ENCODE measurements at regions of chr2 and their contacts with region 1.

Region 1: GRCh38 chr2:126971481-126972278 is 73.0 kb downstream of the TEX51 start:
- DNase-seq: peak in 1 of 2 experiments; percentile 66
- H3K4me3 ChIP-seq: peak overlapping the region; percentile 43; the same call in 1 of the 2 replicates
- H3K27ac ChIP-seq: no peak overlapping the region
- H3K4me1 ChIP-seq: no peaks in the 10 kb centered on the region
- H3K27me3 ChIP-seq: peaks cover 92% of the 10 kb centered on the region
- CTCF ChIP-seq: peak; percentile 99

Region 2: DNA sequence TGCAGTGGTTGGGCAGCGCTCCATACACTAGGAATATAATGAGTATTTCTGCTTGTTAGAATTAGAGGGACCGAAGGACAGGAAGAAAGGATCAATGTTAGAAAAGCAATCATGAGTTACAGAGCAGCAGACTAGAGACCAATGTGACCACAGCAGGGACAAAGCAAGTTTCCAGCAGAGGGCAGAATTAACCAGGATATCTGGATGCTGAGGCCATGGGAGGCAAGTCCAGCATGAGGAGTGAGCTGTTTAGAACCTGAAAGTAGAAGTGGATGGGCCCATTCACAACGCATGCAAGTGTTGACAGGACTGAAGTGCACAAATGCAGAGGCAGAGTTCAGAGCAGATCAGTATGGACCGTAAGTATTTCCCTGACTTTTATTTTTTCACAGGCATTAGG is 1226.2 kb before region 1 on chr2:
- CTCF ChIA-PET with region 1: no interaction called
- POLR2A ChIA-PET with region 1: no interaction called
- intact Hi-C with region 1: loop called (anchors 5 kb)
- DNase-seq: peak; percentile 15 to 47
- H3K4me3 ChIP-seq: no peak overlapping the region
- H3K27ac ChIP-seq: no peak overlapping the region
- H3K4me1 ChIP-seq: no peaks in the 10 kb centered on the region
- H3K27me3 ChIP-seq: no peaks in the 10 kb centered on the region
- CTCF ChIP-seq: peak; percentile 57

Region 3: GRCh38 chr2:126986631-126987187 is 15.0 kb after region 1 on chr2:
- CTCF ChIA-PET with region 1: no interaction called
- POLR2A ChIA-PET with region 1: no interaction called
- intact Hi-C with region 1: no loop called
- DNase-seq: no peak
- H3K4me3 ChIP-seq: no peak overlapping the region
- H3K27ac ChIP-seq: no peak overlapping the region
- H3K4me1 ChIP-seq: no peaks in the 10 kb centered on the region
- H3K27me3 ChIP-seq: peaks cover 86% of the 10 kb centered on the region
- CTCF ChIP-seq: no peak

Region 4: DNA sequence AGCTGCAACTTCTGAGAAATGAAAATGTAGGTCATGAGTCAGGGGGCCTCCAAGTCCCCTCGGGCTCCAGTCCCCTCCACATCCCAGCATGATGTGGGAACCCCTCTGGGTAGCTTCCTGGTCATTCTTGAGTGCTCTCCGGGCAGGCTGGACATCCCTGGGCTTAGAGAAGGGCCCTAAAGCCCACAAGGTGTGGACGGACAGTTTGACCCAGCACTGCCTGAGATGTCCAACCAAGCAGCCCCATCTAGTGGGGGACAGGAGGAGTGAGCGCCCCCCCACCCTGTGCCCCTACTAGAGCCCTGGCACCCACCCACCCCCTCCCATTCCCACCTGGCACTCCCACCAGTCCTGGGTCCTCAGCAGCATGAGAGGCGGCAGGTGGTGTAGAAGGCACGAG is 202.5 kb after region 1 on chr2:
- CTCF ChIA-PET with region 1: no interaction called
- POLR2A ChIA-PET with region 1: no interaction called
- intact Hi-C with region 1: loop called (anchors 5 kb)
- DNase-seq: peak; percentile 47 to 48
- H3K4me3 ChIP-seq: no peak overlapping the region
- H3K27ac ChIP-seq: no peak overlapping the region
- H3K4me1 ChIP-seq: peaks cover 24% of the 10 kb centered on the region
- H3K27me3 ChIP-seq: no peaks in the 10 kb centered on the region
- CTCF ChIP-seq: peak; percentile 70

Measured in PC-9 (cell line).